ENCODE measurements at regions of chr2 and their contacts with region 1.

Region 1: GRCh38 chr2:67772216-67773170 is 290.3 kb downstream of the C1D start:
- DNase-seq: no peak
- ATAC-seq: peak; percentile 62

Region 2: GRCh38 chr2:66803726-66804125 is 968.8 kb before region 1 on chr2:
- intact Hi-C with region 1: loop called (anchors 5 kb)
- DNase-seq: no peak
- ATAC-seq: no peak

Region 3: GRCh38 chr2:66888791-66889631 is 883.5 kb before region 1 on chr2:
- intact Hi-C with region 1: no loop called
- DNase-seq: no peak
- ATAC-seq: peak; percentile 89

Region 4: DNA sequence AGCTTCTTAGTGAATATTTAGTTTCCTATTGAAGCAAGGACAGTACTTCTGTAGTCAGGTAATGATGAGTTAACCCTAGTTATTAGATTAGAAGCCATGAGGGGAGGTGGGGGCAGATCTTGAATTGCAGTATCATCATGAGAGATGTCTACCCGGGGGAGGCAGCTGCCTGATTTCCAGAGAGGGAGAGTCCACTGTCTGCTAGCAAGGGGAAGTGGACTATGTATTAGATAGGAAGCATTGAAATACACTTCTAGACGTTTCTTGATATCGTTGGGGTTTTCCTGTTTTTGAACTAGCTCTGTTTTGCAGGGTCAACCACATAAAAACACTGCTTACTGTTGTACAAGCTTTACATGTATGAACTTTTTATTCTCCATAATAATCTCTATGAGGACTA is 733.7 kb after region 1 on chr2:
- intact Hi-C with region 1: no loop called
- DNase-seq: no peak
- ATAC-seq: no peak